ENCODE measurements at regions of chr9 and their contacts with region 1.

Region 1: DNA sequence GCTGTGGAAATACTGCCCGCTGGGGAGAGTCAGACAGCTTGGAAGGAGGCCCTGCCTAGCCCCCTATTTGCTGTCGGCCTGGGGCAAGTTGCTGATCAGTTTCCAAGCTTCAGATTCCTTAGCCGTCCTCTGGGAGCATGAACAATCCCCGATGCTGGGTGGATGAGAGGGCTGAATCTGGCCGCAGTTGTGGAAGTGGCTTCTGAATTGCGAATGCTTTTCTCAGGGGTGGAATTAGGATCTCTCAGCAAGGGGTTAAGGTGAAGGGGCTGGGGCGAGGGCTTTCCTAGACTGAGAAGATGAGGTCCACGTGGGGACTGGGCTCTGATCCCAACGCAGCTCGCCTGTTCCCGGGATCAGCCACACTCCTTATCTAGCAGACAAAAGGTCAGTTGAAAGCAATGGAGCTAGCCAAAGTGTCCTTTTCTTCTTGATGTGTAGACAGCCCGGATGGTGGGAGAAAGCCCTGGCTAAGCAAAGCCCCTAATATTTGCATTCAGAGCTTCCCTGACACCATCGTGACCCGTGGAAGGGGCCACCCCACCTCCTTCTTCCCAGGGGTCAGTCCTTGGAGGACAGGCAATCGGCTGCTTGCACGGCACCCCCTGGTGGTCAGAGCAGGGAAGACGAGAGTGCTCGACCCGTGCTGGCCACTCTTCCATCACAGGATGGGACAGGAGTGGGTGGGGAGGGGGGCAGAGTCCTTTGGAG is 54.9 kb downstream of the COL15A1 start:
- DNase-seq: peak; percentile 82
- H3K4me3 ChIP-seq: no peak overlapping the region
- H3K27ac ChIP-seq: peak overlapping the region; percentile 16
- H3K4me1 ChIP-seq: no peaks in the 10 kb centered on the region
- H3K27me3 ChIP-seq: no peaks in the 10 kb centered on the region
- CTCF ChIP-seq: peak; percentile 87

Region 2: DNA sequence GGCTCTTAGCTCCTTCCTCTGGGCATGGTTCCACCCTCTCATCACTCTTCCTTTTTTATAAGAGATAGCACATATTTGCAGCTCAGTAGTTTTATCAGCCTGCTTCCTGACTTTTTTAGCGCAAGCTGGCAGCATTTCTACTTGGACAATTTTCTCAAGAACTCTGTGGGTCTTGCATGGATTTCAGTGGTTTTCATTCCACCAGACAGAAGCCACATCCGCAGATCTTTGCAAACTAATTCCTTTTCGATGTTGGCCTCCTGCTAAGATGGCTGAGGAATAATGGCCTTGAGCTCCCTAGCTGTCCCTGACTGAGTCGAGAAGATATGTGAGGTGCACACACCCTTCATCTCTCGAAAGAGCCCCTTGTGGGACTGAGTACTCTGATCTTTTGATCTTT is 141.6 kb before region 1 on chr9:
- intact Hi-C with region 1: loop called (anchors 5 kb)
- DNase-seq: no peak
- H3K4me3 ChIP-seq: no peak overlapping the region
- H3K27ac ChIP-seq: no peak overlapping the region
- H3K4me1 ChIP-seq: no peaks in the 10 kb centered on the region
- H3K27me3 ChIP-seq: no peaks in the 10 kb centered on the region
- CTCF ChIP-seq: no peak

Region 3: GRCh38 chr9:99140685-99141314 is 142.2 kb after region 1 on chr9:
- intact Hi-C with region 1: loop called (anchors 5 kb)
- DNase-seq: peak; percentile 30
- H3K4me3 ChIP-seq: no peak overlapping the region
- H3K27ac ChIP-seq: no peak overlapping the region
- H3K4me1 ChIP-seq: no peaks in the 10 kb centered on the region
- H3K27me3 ChIP-seq: no peaks in the 10 kb centered on the region
- CTCF ChIP-seq: peak; percentile 59